ENCODE measurements at regions of chrX and their contacts with region 1.

Region 1: GRCh38 chrX:129781134-129781672 is 1.5 kb downstream of the SASH3 start:
- DNase-seq: peak; percentile 91
- H3K4me3 Mint-ChIP-seq: peak overlapping the region; percentile 82
- H3K27ac Mint-ChIP-seq: peak overlapping the region; percentile 97
- H3K4me1 Mint-ChIP-seq: peaks cover 53% of the 10 kb centered on the region
- H3K27me3 Mint-ChIP-seq: no peaks in the 10 kb centered on the region

Region 2: DNA sequence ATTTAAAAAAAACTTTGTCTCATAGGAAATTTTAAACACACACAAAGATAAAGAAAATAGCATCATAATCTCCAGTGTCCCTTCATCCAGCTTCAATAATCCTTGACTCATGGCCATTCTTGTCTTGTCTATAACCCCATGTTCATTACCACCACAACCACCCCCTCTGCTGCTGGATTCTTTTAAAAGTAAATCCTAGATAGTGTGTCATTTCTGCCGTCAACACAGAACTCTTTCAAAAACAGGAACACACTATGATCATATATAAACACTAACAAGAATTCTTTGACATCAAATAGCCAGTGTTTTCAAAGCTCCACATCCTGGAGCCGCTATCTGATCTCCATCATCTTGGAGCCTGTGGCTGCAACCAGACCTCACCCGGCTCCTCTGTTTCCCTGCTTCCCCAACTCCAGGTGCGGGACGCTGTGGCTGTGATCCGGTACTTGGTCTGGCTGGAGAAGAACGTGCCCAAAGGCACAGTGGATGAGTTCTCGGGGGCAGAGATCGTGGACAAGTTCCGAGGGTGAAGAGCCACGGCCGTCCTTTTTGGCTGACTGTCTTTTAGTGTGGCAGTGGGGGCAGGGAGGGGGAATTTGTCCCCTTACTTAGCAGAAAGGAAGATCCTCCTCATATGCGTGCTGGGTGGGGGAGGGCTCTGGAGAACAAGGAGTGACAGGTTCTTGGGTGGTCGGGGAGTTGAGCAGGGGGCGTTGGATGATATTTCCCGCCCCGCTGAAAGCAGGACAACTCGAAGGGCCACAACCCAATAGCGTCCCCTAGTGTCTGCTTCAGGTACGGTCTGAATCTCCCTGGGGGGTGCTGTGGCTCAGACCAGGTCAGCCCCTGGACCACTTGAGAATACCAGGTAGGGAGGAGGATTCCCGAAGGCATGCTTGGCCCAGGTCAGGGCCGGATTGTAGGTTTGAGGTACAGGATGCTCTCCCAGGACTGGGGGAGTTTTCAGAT is 26.9 kb before region 1 on chrX:
- CTCF ChIA-PET with region 1: interaction called, 13 read pairs
- intact Hi-C with region 1: loop called (anchors 1 kb)
- DNase-seq: peak; percentile 49
- H3K4me3 Mint-ChIP-seq: peak overlapping the region; percentile 15
- H3K27ac Mint-ChIP-seq: peak overlapping the region; percentile 8
- H3K4me1 Mint-ChIP-seq: peaks cover 45% of the 10 kb centered on the region
- H3K27me3 Mint-ChIP-seq: no peaks in the 10 kb centered on the region

Region 3: GRCh38 chrX:129798888-129799287 is 17.7 kb after region 1 on chrX:
- CTCF ChIA-PET with region 1: interaction called, 5 read pairs
- intact Hi-C with region 1: loop called (anchors 2 kb)
- DNase-seq: peak; percentile 67
- H3K4me3 Mint-ChIP-seq: peak overlapping the region; percentile 15
- H3K27ac Mint-ChIP-seq: peak overlapping the region; percentile 75
- H3K4me1 Mint-ChIP-seq: peaks cover 28% of the 10 kb centered on the region
- H3K27me3 Mint-ChIP-seq: no peaks in the 10 kb centered on the region

Region 4: GRCh38 chrX:129843459-129844306 is 62.5 kb after region 1 on chrX and contains the start of gene ZDHHC9:
- CTCF ChIA-PET with region 1: no interaction called
- intact Hi-C with region 1: loop called (anchors 2 kb)
- DNase-seq: peak; percentile 89
- H3K4me3 Mint-ChIP-seq: peak within 1 kb of the TSS; percentile 88
- H3K27ac Mint-ChIP-seq: peak within 1 kb of the TSS; percentile 70
- H3K4me1 Mint-ChIP-seq: peaks cover 38% of the 10 kb centered on the region
- H3K27me3 Mint-ChIP-seq: no peaks in the 10 kb centered on the region
- total RNA-seq, gene ZDHHC9: 7.1 TPM

Region 5: GRCh38 chrX:129961180-129962083 is 180.2 kb after region 1 on chrX:
- CTCF ChIA-PET with region 1: no interaction called
- intact Hi-C with region 1: loop called (anchors 5 kb)
- DNase-seq: peak; percentile 84
- H3K4me3 Mint-ChIP-seq: peak overlapping the region; percentile 76
- H3K27ac Mint-ChIP-seq: peak overlapping the region; percentile 86
- H3K4me1 Mint-ChIP-seq: peaks cover 11% of the 10 kb centered on the region
- H3K27me3 Mint-ChIP-seq: no peaks in the 10 kb centered on the region

Region 6: DNA sequence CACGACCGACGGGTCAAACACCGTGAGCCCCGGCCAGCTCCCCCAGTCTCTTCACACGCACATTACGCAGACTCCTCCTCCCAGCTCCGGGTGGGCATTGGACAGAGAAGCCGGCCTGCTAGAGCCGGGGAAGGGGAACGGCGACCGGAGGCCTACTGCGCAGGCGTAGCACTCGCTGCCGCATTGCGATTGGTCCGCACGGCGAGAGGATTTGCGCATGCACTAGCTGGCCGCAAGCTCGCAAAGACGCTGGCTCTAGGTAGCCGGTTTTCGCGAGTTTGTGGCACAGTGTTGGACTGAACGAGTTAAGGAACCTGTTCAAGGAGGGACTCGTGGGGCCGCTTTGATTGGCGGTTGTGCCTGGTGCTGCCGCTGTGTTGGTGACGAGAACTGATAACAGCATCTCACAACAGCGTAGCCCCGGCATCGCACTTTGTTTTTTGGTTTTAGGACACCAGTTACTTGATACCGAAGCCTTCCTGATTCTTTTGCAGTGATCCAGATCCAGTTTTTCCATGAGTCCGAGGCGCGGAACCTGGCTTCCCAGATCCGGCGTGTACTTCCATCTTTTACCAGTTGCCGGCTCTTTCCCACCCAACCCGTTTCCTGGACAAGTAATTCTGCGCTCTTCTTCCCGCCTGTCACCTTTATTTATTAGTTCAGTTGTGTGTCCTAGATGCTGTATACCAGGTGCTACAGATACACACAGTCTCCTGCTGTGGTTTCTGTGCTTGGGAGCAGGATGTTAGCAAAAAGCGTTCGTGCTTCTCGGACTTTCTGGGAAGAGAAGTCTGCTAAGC is 384.7 kb after region 1 on chrX and contains the start of gene AIFM1:
- CTCF ChIA-PET with region 1: no interaction called
- intact Hi-C with region 1: no loop called
- DNase-seq: peak; percentile 90
- H3K4me3 Mint-ChIP-seq: peak within 1 kb of the TSS; percentile 93
- H3K27ac Mint-ChIP-seq: peak within 1 kb of the TSS; percentile 92
- H3K4me1 Mint-ChIP-seq: peaks cover 35% of the 10 kb centered on the region
- H3K27me3 Mint-ChIP-seq: no peaks in the 10 kb centered on the region
- total RNA-seq, gene AIFM1: 59.4 to 63.1 TPM

Region 7: GRCh38 chrX:130268500-130269170 is 487.4 kb after region 1 on chrX and contains the start of gene ZNF280C:
- CTCF ChIA-PET with region 1: no interaction called
- intact Hi-C with region 1: loop called (anchors 1 kb)
- DNase-seq: peak; percentile 95
- H3K4me3 Mint-ChIP-seq: peak within 1 kb of the TSS; percentile 85
- H3K27ac Mint-ChIP-seq: peak within 1 kb of the TSS; percentile 79
- H3K4me1 Mint-ChIP-seq: peaks cover 18% of the 10 kb centered on the region
- H3K27me3 Mint-ChIP-seq: no peaks in the 10 kb centered on the region
- total RNA-seq, gene ZNF280C: 3.9 to 4.0 TPM